A673 (cell line): ENCODE measurements at regions of chr22 and their contacts with region 1.

Region 1: GRCh38 chr22:39589875-39590274 is 19.3 kb downstream of the CACNA1I start:
- DNase-seq: no peak
- H3K4me3 ChIP-seq: no peak overlapping the region
- H3K27ac ChIP-seq: no peak overlapping the region
- H3K4me1 ChIP-seq: no peaks in the 10 kb centered on the region
- H3K27me3 ChIP-seq: no peaks in the 10 kb centered on the region
- CTCF ChIP-seq: no peak

Region 2: GRCh38 chr22:37870273-37870672 is 1719.6 kb before region 1 on chr22:
- CTCF ChIA-PET with region 1: no interaction called
- POLR2A ChIA-PET with region 1: no interaction called
- intact Hi-C with region 1: no loop called
- DNase-seq: no peak
- H3K4me3 ChIP-seq: no peak overlapping the region
- H3K27ac ChIP-seq: no peak overlapping the region
- H3K4me1 ChIP-seq: no peaks in the 10 kb centered on the region
- H3K27me3 ChIP-seq: no peaks in the 10 kb centered on the region
- CTCF ChIP-seq: no peak

Region 3: DNA sequence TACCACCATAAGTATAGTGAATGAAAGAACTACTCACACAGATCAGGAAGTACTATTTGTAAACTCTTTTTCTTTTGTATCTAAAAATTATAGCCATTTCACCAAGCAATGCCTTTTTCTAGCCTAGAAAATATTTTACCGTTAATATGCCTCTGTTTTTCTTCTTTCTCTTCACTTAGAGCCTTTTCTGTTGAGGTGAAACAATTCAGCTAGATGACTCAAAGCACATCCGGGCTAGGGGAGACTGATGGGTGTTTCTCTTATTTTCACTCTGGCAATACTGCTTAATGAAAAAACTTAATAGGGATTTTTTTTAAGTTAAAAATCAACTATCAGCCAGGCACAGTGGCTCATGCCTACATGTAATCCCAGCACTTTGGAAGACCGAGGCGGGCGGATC is 873.8 kb after region 1 on chr22:
- CTCF ChIA-PET with region 1: no interaction called
- POLR2A ChIA-PET with region 1: interaction called, 13 read pairs
- intact Hi-C with region 1: no loop called
- DNase-seq: no peak
- H3K4me3 ChIP-seq: no peak overlapping the region
- H3K27ac ChIP-seq: no peak overlapping the region
- H3K4me1 ChIP-seq: no peaks in the 10 kb centered on the region
- H3K27me3 ChIP-seq: no peaks in the 10 kb centered on the region
- CTCF ChIP-seq: no peak